CD8-positive, alpha-beta T cell (primary cell): ENCODE measurements at regions of chr20 and their contacts with region 1.

Region 1: DNA sequence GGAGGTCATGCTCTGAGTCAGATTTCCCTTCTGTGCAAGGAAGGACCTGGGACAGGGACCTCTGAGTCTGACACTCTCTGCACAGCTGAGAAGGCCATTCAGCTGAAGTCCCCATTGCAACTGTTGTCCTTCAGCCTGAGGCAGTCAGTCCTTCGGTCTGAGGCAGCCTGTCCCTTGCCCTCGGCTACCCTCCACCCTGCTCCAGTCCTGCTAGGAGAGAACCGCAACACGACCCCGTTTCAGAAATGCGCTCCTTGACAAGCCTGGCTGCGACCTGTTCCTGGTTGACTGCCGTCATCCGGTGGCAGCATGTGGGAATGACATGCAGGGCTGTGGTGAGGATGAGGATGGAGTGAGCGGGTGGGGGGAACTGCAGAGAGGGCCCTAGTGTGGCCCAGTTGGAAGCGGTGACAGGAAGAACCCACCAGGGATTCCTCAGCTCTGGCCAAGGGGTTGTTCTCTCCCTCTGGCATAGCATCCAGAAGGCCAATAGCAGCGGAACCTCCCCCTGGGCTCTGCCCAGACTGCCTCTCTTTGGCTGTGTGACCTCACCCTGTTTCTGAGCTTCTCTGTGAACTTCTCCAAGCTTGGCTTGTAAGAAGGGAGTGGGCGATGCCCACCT is 40.3 kb upstream of the ANGPT4 start:
- DNase-seq: peak; percentile 55 to 88 (median 74)
- ATAC-seq: peak; percentile 94
- H3K4me3 ChIP-seq: no peak overlapping the region
- H3K4me3 Mint-ChIP-seq: no peak overlapping the region
- H3K27ac ChIP-seq: no peak overlapping the region
- H3K27ac Mint-ChIP-seq: no peak overlapping the region
- H3K4me1 ChIP-seq: peaks cover 4% of the 10 kb centered on the region
- H3K4me1 Mint-ChIP-seq: peaks cover 3% of the 10 kb centered on the region
- H3K27me3 ChIP-seq: no peaks in the 10 kb centered on the region
- H3K27me3 Mint-ChIP-seq: peaks cover 47% of the 10 kb centered on the region
- CTCF ChIP-seq: peak; percentile 99

Region 2: DNA sequence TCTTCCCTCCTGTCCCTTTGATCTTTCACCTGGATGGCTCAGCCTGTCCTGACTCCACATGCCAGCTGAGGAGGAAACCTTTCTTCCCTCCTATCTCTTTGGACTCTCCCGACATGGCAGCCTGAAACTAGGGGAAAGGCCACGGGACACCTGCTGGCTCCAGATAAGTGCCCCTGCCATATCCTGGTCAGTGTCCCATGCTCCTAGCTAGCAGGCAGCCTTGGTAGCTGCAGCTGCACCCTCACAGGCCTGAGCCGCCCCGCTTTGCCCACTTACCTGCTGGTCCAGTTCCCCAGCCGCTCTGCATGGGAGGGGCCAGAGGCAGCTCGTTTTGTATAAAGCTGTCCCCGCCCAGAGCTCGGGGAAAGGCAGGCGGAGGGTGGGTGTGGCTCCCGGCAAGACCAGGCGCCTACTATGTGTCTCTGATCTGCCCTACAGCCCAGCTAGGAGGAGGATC is 180.7 kb before region 1 on chr20:
- CTCF ChIA-PET with region 1: no interaction called
- POLR2A ChIA-PET with region 1: no interaction called
- intact Hi-C with region 1: no loop called
- DNase-seq: no peak
- ATAC-seq: no peak
- H3K4me3 ChIP-seq: no peak overlapping the region
- H3K4me3 Mint-ChIP-seq: no peak overlapping the region
- H3K27ac ChIP-seq: no peak overlapping the region
- H3K27ac Mint-ChIP-seq: no peak overlapping the region
- H3K4me1 ChIP-seq: no peaks in the 10 kb centered on the region
- H3K4me1 Mint-ChIP-seq: no peaks in the 10 kb centered on the region
- H3K27me3 ChIP-seq: no peaks in the 10 kb centered on the region
- H3K27me3 Mint-ChIP-seq: peaks cover 6% of the 10 kb centered on the region
- CTCF ChIP-seq: no peak

Region 3: GRCh38 chr20:815914-816606 is 140.4 kb before region 1 on chr20:
- CTCF ChIA-PET with region 1: interaction called, 325 read pairs
- POLR2A ChIA-PET with region 1: interaction called, 5 read pairs
- intact Hi-C with region 1: loop called (anchors 1 kb)
- DNase-seq: peak; percentile 44 to 81 (median 72)
- ATAC-seq: peak; percentile 79
- H3K4me3 ChIP-seq: no peak overlapping the region
- H3K4me3 Mint-ChIP-seq: no peak overlapping the region
- H3K27ac ChIP-seq: no peak overlapping the region
- H3K27ac Mint-ChIP-seq: no peak overlapping the region
- H3K4me1 ChIP-seq: peaks cover 3% of the 10 kb centered on the region
- H3K4me1 Mint-ChIP-seq: peaks cover 5% of the 10 kb centered on the region
- H3K27me3 ChIP-seq: no peaks in the 10 kb centered on the region
- H3K27me3 Mint-ChIP-seq: peaks cover 19% of the 10 kb centered on the region
- CTCF ChIP-seq: peak; percentile 93

Region 4: GRCh38 chr20:833450-834150 is 122.8 kb before region 1 on chr20 and contains the start of gene FAM110A:
- CTCF ChIA-PET with region 1: interaction called, 40 read pairs
- POLR2A ChIA-PET with region 1: no interaction called
- intact Hi-C with region 1: no loop called
- DNase-seq: peak; percentile 89 to 99 (median 96)
- ATAC-seq: peak; percentile 96
- H3K4me3 ChIP-seq: peak within 1 kb of the TSS; percentile 90 to 96
- H3K4me3 Mint-ChIP-seq: peak within 1 kb of the TSS; percentile 91
- H3K27ac ChIP-seq: peak within 1 kb of the TSS; percentile 85 to 96
- H3K27ac Mint-ChIP-seq: peak within 1 kb of the TSS; percentile 82
- H3K4me1 ChIP-seq: peaks cover 27% of the 10 kb centered on the region
- H3K4me1 Mint-ChIP-seq: peaks cover 43% of the 10 kb centered on the region
- H3K27me3 ChIP-seq: no peaks in the 10 kb centered on the region
- H3K27me3 Mint-ChIP-seq: no peaks in the 10 kb centered on the region
- CTCF ChIP-seq: no peak
- total RNA-seq, gene FAM110A: 6.7 to 7.7 TPM

Region 5: DNA sequence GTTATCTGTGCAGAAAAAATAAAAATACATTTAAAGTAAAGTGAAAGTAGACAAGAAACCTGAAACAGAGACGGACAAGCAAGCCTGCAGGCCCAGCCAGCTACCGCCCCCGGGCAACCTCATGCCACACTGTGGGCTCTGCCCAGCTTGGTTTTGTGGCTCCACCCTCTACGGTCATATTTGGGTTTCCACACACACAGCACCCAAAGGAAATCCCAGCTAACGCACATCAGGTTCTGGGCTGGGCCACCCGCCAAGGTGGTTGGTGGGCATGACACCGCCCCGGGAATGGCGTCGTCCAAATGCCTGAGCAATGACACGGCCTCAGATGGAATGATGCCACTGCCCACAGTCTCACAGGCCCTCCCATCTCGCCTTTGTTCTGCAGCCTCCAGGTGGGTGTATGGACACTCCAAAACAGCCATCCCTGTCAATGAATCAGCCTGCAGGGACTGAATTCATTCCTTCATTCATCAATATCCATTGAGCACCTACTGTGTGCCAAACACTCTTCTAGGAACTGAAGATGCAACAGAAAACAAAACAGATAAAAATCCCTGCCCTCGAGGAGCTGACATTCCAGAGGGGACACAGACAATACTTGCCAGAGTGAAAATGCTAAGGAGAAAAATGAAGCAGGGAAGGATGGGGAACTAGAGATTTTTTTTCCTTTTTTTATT is 99.9 kb before region 1 on chr20:
- CTCF ChIA-PET with region 1: interaction called, 15 read pairs
- POLR2A ChIA-PET with region 1: no interaction called
- intact Hi-C with region 1: no loop called
- DNase-seq: peak in 7 of 9 experiments; percentile 30 to 77 (median 64)
- ATAC-seq: peak; percentile 91
- H3K4me3 ChIP-seq: peak overlapping the region in 1 of 2 experiments; percentile 28
- H3K4me3 Mint-ChIP-seq: peak overlapping the region; percentile 66
- H3K27ac ChIP-seq: peak overlapping the region in 1 of 2 experiments; percentile 17
- H3K27ac Mint-ChIP-seq: peak overlapping the region; percentile 83
- H3K4me1 ChIP-seq: peaks cover 37% of the 10 kb centered on the region
- H3K4me1 Mint-ChIP-seq: peaks cover 62% of the 10 kb centered on the region
- H3K27me3 ChIP-seq: no peaks in the 10 kb centered on the region
- H3K27me3 Mint-ChIP-seq: no peaks in the 10 kb centered on the region
- CTCF ChIP-seq: no peak

Region 6: DNA sequence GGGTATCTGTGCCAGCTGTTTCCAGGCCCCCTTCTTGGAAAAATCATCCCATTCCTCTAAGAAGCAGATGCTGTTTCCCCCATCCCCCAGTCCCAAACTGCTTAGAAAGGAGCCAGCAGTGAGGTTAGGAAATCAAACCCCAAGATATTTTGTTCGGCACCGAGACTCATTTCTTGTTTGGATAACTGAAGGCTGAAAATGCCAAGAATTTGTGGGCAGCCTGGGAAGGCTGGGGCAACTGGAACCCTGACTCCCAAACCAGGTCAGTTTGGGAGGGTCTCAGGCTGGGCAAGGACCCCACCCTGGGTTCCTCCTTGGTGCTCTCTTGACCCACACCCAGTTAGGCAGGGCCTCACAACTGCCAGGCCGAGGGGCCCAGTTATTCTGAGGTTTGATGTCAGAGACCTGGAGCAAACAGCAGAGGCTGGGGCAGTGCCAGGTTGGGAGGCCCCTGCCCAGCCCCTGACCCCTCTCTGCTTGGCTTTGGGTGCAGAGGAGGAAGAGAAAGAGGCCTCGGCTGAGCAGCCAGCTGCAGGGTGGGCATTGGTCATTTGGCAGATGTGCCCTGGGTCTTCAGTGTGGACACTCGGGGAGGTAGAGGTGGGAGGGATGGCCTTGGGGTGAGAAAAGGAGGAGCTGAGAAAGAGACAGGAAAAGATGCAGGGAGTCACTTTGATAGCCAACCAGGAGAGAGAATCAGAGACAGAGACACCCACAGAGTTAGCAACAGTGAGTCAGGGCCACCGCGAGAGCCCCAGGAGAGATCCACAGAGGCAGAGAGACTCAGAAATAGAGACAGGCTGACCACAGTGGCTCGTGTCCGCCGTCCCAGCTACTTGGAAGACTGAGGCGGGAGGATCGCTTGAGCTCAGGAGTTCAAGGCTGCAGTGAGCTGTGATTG is 45.3 kb before region 1 on chr20:
- CTCF ChIA-PET with region 1: interaction called, 14 read pairs
- POLR2A ChIA-PET with region 1: no interaction called
- intact Hi-C with region 1: no loop called
- DNase-seq: no peak
- ATAC-seq: no peak
- H3K4me3 ChIP-seq: no peak overlapping the region
- H3K4me3 Mint-ChIP-seq: no peak overlapping the region
- H3K27ac ChIP-seq: no peak overlapping the region
- H3K27ac Mint-ChIP-seq: no peak overlapping the region
- H3K4me1 ChIP-seq: no peaks in the 10 kb centered on the region
- H3K4me1 Mint-ChIP-seq: no peaks in the 10 kb centered on the region
- H3K27me3 ChIP-seq: no peaks in the 10 kb centered on the region
- H3K27me3 Mint-ChIP-seq: peaks cover 13% of the 10 kb centered on the region
- CTCF ChIP-seq: no peak

Region 7: DNA sequence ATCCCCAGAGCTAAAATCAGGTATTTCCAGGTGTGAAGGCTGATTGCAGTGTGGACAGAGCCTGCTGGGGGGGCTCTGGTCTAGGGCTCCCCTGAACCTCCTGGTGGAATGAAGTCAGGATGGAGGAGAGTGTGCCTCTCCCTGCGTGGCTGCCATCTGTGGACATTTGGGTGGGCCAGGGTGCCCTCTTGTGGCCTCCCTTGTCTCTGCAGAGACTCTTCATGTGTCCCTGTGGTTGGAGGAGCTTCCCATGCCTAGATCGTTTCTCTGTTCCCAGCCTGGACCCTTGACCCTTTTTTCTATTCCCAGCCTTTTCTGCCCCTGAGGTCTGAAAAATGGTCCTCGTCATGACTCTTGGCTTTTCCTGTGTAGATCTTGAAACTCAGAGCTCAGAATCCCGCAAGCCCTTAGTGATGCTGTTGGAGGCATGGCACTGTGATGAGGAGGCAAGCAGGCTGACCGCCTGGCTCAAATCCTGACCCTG is 152.0 kb after region 1 on chr20:
- CTCF ChIA-PET with region 1: interaction called, 5 read pairs
- POLR2A ChIA-PET with region 1: no interaction called
- intact Hi-C with region 1: loop called in 1 of 2 experiments (anchors 10 kb)
- DNase-seq: peak; percentile 22 to 70 (median 52)
- ATAC-seq: peak; percentile 82
- H3K4me3 ChIP-seq: no peak overlapping the region
- H3K4me3 Mint-ChIP-seq: no peak overlapping the region
- H3K27ac ChIP-seq: no peak overlapping the region
- H3K27ac Mint-ChIP-seq: no peak overlapping the region
- H3K4me1 ChIP-seq: no peaks in the 10 kb centered on the region
- H3K4me1 Mint-ChIP-seq: peaks cover 4% of the 10 kb centered on the region
- H3K27me3 ChIP-seq: no peaks in the 10 kb centered on the region
- H3K27me3 Mint-ChIP-seq: no peaks in the 10 kb centered on the region
- CTCF ChIP-seq: peak; percentile 62